HEK293 (cell line): ENCODE measurements at regions of chr18 and their contacts with region 1.

Region 1: GRCh38 chr18:43571078-43571689 is 293.9 kb upstream of the SYT4 start:
- H3K4me3 ChIP-seq: no peak overlapping the region
- H3K27ac ChIP-seq: no peak overlapping the region
- H3K4me1 ChIP-seq: no peaks in the 10 kb centered on the region
- CTCF ChIP-seq: peak; percentile 8; the same call in 1 of the 2 replicates

Region 2: GRCh38 chr18:43507842-43508481 is 63.2 kb before region 1 on chr18:
- CTCF ChIA-PET with region 1: no interaction called
- POLR2A ChIA-PET with region 1: no interaction called
- H3K4me3 ChIP-seq: no peak overlapping the region
- H3K27ac ChIP-seq: no peak overlapping the region
- H3K4me1 ChIP-seq: no peaks in the 10 kb centered on the region
- CTCF ChIP-seq: no peak

Region 3: GRCh38 chr18:43581936-43582519 is 10.8 kb after region 1 on chr18:
- CTCF ChIA-PET with region 1: interaction called, 488 read pairs
- POLR2A ChIA-PET with region 1: no interaction called
- H3K4me3 ChIP-seq: no peak overlapping the region
- H3K27ac ChIP-seq: no peak overlapping the region
- H3K4me1 ChIP-seq: no peaks in the 10 kb centered on the region
- CTCF ChIP-seq: no peak

Region 4: DNA sequence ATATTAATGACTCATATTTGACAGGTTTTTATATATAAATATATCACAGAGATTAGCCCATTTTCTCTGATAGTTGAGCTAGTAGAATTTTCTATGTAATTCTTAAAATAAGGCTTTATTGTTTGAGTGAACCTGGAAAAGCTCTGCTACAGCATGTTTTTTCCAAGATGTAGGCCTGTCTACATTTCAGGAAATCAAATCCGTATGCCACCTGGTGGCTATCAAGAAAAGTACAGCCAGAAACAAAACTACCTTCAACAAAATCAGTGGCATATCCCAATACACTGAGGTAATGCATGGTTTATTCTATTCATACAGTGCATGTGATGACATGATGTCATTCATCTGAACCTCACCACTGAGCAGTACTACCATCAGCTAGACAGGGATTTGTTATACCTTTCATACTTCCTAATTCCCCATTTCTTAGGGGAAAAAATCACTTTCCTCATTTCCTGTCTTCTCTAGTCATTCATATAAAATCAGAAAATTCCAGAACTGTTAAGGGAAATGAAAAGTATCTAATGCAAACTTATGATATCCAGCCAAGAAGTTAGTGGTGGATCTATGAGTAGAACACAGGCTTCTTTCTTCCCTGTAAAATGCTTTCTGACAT is 16.5 kb after region 1 on chr18:
- CTCF ChIA-PET with region 1: interaction called, 488 read pairs
- POLR2A ChIA-PET with region 1: no interaction called
- H3K4me3 ChIP-seq: no peak overlapping the region
- H3K27ac ChIP-seq: no peak overlapping the region
- H3K4me1 ChIP-seq: no peaks in the 10 kb centered on the region
- CTCF ChIP-seq: peak; percentile 34; the same call in 1 of the 2 replicates

Region 5: DNA sequence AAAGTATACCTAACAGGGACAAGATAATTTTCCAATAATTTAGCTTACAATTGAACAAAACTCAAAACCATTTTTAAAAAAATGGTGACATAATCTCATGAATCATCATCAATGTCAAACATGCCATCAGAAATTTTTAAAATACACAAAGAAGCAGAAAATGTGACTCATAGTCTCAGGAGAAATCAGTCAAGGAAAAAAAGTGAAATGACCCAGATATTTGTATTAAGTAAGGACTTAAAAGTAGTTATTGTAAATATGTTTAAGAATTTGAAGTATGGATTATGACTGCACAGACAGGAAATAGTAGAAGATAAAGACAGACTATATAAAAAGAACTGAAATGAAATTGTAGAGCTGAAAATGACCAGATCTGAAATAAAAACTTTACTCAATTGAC is 180.0 kb after region 1 on chr18:
- CTCF ChIA-PET with region 1: no interaction called
- POLR2A ChIA-PET with region 1: no interaction called
- H3K4me3 ChIP-seq: no peak overlapping the region
- H3K27ac ChIP-seq: no peak overlapping the region
- H3K4me1 ChIP-seq: no peaks in the 10 kb centered on the region
- CTCF ChIP-seq: no peak